ENCODE measurements at regions of chrX and their contacts with region 1.

Region 1: GRCh38 chrX:43958529-43958928 is 14.7 kb downstream of the NDP start:
- DNase-seq: peak; percentile 13
- ATAC-seq: peak; percentile 87
- H3K4me3 ChIP-seq: no peak overlapping the region
- H3K27ac ChIP-seq: no peak overlapping the region
- H3K4me1 ChIP-seq: no peaks in the 10 kb centered on the region
- H3K27me3 ChIP-seq: no peaks in the 10 kb centered on the region
- CTCF ChIP-seq: peak; percentile 62 to 83 (median 68)
- EP300 ChIP-seq: no peak
- POLR2A ChIP-seq: no peak
- RAD21 ChIP-seq: peak; percentile 77

Region 2: GRCh38 chrX:44012484-44013096 is 54.1 kb after region 1 on chrX:
- CTCF ChIA-PET with region 1: no interaction called
- POLR2A ChIA-PET with region 1: no interaction called
- RAD21 ChIA-PET with region 1: no interaction called
- SMC1A ChIA-PET with region 1: no interaction called
- in situ Hi-C with region 1: no loop called
- intact Hi-C with region 1: no loop called
- DNase-seq: no peak
- ATAC-seq: no peak
- H3K4me3 ChIP-seq: no peak overlapping the region
- H3K27ac ChIP-seq: no peak overlapping the region
- H3K4me1 ChIP-seq: no peaks in the 10 kb centered on the region
- H3K27me3 ChIP-seq: no peaks in the 10 kb centered on the region
- CTCF ChIP-seq: no peak
- EP300 ChIP-seq: no peak
- POLR2A ChIP-seq: no peak
- RAD21 ChIP-seq: no peak

Region 3: DNA sequence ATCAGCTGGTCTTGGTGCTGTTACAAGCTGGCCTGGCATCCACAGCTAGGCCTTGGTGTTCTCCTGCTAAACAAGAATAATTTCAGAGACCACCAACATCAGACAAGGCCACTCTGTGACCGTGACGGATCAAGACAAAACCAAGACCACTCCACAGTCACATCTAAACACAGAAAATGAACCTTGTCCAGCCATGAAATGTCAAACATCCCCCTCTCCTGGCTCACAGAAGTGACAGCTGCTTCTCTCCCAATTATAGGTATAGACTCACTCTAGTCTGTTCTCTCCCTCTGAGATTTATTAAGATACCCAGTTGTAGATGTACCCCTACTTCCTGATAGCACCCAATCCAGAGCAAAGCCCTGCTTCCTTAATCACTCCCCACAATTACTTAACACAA is 344.6 kb after region 1 on chrX:
- CTCF ChIA-PET with region 1: interaction called, 11 read pairs
- POLR2A ChIA-PET with region 1: interaction called, 3 read pairs
- RAD21 ChIA-PET with region 1: interaction called, 6 read pairs
- SMC1A ChIA-PET with region 1: interaction called, 5 read pairs
- in situ Hi-C with region 1: no loop called
- intact Hi-C with region 1: no loop called
- DNase-seq: no peak
- ATAC-seq: no peak
- H3K4me3 ChIP-seq: no peak overlapping the region
- H3K27ac ChIP-seq: no peak overlapping the region
- H3K4me1 ChIP-seq: no peaks in the 10 kb centered on the region
- H3K27me3 ChIP-seq: no peaks in the 10 kb centered on the region
- CTCF ChIP-seq: peak in 1 of 3 experiments; percentile 22; a peak in 1 of 6 replicates
- EP300 ChIP-seq: no peak
- POLR2A ChIP-seq: no peak
- RAD21 ChIP-seq: no peak

Region 4: DNA sequence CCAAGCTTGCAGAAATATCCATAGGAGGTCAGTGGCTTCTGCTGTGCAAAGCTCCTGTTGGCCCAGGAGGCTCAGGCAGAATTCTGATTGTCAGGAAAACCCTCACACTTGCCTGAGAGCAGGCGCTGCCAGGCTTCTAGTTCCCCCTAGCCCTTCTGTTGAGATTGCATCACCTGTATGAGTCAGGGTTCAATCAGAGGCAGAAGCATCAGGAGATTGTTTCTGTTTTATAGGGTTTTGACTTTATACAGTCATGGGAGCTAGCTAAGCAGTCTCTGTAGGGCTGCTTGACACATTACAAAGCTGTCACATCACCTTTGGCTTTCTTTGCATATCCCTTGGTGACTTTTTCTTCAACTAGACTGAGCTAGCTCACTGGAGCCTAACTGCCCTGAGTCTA is 1214.4 kb after region 1 on chrX:
- CTCF ChIA-PET with region 1: no interaction called
- POLR2A ChIA-PET with region 1: no interaction called
- RAD21 ChIA-PET with region 1: no interaction called
- SMC1A ChIA-PET with region 1: no interaction called
- in situ Hi-C with region 1: loop called (anchors 10 kb)
- intact Hi-C with region 1: no loop called
- DNase-seq: no peak
- ATAC-seq: no peak
- H3K4me3 ChIP-seq: no peak overlapping the region
- H3K27ac ChIP-seq: no peak overlapping the region
- H3K4me1 ChIP-seq: no peaks in the 10 kb centered on the region
- H3K27me3 ChIP-seq: no peaks in the 10 kb centered on the region; a peak in 1 of 4 replicates
- CTCF ChIP-seq: no peak
- EP300 ChIP-seq: no peak
- POLR2A ChIP-seq: no peak
- RAD21 ChIP-seq: no peak

Measured in GM12878 (cell line).